ENCODE measurements at regions of chr12 and their contacts with region 1.

Region 1: DNA sequence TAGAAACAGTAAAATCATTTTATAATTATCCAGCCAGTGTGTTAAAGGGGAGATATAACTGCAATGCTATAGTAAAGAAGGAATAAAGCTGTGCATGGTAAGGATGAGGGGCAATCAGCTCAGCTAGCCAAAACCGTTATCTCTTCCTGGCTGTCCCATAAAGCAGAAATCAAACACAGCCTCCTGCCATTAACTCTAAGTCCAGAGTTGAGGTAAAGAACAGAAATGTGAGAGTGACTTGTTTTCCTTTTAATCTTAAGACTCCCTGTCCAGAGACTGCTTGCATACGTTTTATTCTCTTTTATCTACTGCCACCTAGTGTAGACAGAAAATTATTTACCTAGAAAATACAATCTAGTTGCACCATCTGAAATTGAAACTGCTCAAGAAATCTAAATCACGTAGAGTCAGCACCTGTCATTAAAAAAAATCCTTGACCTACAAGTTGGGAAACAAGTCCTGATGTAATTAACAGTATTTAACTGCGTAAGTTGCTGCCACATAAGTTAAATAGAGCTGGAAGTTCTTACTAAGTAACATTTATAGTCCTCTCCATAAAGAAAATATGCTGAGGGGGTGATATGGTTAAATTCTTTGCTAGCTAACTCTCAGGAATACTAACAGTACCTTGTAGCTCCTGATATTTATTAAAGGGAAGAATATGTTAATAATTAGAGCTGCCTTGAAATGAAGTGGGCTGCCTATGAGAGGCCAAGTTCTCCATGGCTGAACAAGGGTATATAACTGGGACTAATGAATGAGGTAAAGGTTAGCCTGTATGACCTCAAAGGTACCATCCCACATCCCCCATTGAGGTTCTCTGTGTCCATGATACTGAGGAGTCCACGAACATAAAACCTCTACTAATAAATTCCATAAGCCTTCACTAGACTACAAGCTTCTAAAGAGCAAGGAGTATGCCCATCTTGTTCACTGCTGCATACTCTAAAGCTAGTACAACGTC is 62.7 kb downstream of the GALNT4 start:
- DNase-seq: no peak
- H3K4me3 ChIP-seq: peak overlapping the region in 1 of 4 donors; percentile 23
- H3K27ac ChIP-seq: peak overlapping the region; percentile 29 to 54 (median 46)
- H3K4me1 ChIP-seq: peaks cover 3 to 27% (median 7%) of the 10 kb centered on the region in 4 donors
- H3K27me3 ChIP-seq: no peaks in the 10 kb centered on the region
- CTCF ChIP-seq: peak; percentile 54 to 80 (median 59)
- EP300 ChIP-seq: no peak
- POLR2A ChIP-seq: no peak

Region 2: GRCh38 chr12:89019408-89020120 is 442.4 kb before region 1 on chr12:
- in situ Hi-C with region 1: loop called in 3 of 4 experiments (anchors 10 to 25 kb)
- intact Hi-C with region 1: no loop called
- DNase-seq: peak; percentile 86
- H3K4me3 ChIP-seq: no peak overlapping the region
- H3K27ac ChIP-seq: no peak overlapping the region
- H3K4me1 ChIP-seq: peaks cover 0 to 15% (median 4%) of the 10 kb centered on the region in 4 donors
- H3K27me3 ChIP-seq: no peaks in the 10 kb centered on the region
- CTCF ChIP-seq: peak; percentile 76 to 86 (median 81)
- EP300 ChIP-seq: no peak
- POLR2A ChIP-seq: no peak

Region 3: GRCh38 chr12:89029961-89030360 is 432.0 kb before region 1 on chr12:
- in situ Hi-C with region 1: loop called in 2 of 4 experiments (anchors 10 kb)
- intact Hi-C with region 1: loop called (anchors 5 kb)
- DNase-seq: no peak
- H3K4me3 ChIP-seq: no peak overlapping the region
- H3K27ac ChIP-seq: no peak overlapping the region
- H3K4me1 ChIP-seq: no peaks in the 10 kb centered on the region
- H3K27me3 ChIP-seq: no peaks in the 10 kb centered on the region
- CTCF ChIP-seq: no peak
- EP300 ChIP-seq: no peak
- POLR2A ChIP-seq: no peak

Region 4: DNA sequence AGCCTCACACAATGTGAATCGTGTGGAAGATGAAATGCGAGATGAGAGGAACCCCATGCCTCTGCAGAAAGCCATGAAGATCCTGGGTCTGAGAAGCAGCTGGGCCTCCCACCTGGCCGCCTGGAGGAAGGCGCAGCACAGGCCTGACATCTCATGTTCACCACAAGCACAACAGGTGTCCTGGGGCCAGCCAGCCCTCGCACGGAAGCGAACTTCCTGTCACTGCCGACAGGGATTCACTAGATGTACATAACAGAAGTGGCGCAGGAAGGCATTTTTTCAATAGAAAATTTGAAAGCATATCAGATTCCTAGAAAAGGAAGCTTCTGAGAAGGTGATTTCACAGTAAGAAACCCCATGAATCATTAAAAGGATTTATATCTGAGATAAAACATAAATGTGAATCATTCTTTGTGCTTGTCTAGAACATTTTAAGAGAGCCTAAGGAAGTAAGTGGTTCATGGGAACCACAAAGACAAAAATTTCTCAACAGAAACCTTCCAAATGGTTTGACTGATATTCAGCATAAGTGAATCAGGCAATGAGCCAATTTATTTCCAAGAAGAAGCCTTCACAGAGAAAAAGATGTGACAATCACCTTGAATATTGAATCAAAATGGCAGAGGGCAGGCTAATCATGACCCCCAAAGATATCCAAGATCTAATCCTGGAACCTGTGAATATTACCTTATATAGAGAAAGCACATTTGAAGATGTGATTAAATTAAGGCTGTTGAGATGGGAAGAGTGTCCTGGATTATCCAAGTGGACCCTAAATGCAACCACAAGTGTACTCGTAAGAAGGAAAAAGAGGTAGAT is 421.6 kb before region 1 on chr12:
- in situ Hi-C with region 1: loop called in 2 of 4 experiments (anchors 10 kb)
- intact Hi-C with region 1: no loop called
- DNase-seq: peak; percentile 61
- H3K4me3 ChIP-seq: no peak overlapping the region
- H3K27ac ChIP-seq: no peak overlapping the region
- H3K4me1 ChIP-seq: no peaks in the 10 kb centered on the region
- H3K27me3 ChIP-seq: no peaks in the 10 kb centered on the region
- CTCF ChIP-seq: no peak
- EP300 ChIP-seq: no peak
- POLR2A ChIP-seq: no peak

Region 5: DNA sequence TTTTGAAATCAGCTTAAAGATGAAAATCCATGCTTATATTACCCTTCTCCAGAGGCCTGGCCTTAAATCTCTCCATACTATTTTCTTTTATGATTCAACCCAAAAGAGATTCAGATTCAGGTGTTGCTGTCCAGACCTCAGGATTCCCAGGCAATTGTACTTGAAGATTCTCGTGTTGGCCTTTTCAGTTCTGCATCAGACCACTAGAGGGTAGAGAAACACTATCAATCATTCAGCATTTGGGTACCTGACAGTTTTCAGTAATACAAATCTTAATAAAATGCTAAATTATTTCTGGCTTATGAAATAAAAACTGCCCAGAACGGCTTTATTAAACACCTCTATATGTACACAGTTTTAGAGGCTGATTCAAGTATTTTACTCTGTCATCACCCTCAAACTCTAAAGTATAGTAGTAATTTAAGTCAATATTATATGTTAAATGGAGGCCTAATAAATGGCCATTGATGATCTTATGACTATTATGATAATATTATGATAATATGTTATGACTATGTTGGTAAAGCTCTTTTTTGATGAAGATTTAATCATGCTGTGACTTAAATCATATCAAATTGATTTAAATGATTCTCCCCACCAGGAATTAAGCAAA is 410.8 kb before region 1 on chr12:
- in situ Hi-C with region 1: loop called (anchors 10 kb)
- intact Hi-C with region 1: loop called (anchors 2 kb)
- DNase-seq: no peak
- H3K4me3 ChIP-seq: no peak overlapping the region
- H3K27ac ChIP-seq: no peak overlapping the region
- H3K4me1 ChIP-seq: no peaks in the 10 kb centered on the region
- H3K27me3 ChIP-seq: no peaks in the 10 kb centered on the region
- CTCF ChIP-seq: peak; percentile 88 to 94 (median 90)
- EP300 ChIP-seq: no peak
- POLR2A ChIP-seq: no peak

Region 6: DNA sequence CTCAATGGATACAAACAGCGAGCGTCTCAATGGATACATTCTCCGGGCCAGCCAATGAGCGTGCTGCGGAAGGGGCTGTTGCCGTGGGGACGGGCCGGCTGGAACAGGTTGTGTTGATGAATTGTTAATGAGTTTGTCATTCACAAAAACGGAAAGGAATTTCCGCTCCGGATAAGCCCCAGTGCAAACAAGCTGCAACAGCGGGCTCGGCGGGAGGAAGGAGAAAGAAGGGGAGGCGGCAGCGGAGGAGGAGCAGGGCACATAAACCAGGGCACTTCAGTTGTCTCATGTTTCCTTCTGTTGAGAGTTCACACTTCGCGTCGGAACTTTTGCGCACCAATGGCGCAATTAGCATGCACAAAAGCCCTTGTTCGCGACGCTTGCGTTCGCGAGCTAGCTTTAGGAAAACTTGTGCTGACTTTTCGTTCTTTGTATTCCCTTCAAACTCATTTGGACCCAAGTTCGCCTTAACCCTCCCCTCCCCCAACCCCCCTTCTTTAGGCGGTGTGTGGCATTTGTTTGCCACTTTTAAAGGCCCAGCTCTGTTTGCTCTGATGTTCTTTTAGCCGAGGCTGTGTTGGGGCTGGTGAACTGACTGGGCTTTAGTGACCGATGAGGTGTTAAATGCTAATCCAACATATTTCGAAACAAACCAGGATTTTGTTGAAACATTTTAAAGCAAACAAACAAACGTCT is 109.3 kb before region 1 on chr12 and contains the start of gene DUSP6:
- in situ Hi-C with region 1: loop called in 1 of 4 experiments (anchors 10 kb)
- intact Hi-C with region 1: loop called (anchors 5 kb)
- DNase-seq: peak; percentile 97
- H3K4me3 ChIP-seq: peak within 1 kb of the TSS; percentile 61 to 71 (median 67)
- H3K27ac ChIP-seq: peak within 1 kb of the TSS; percentile 96 to 98 (median 98)
- H3K4me1 ChIP-seq: peaks cover 8 to 60% (median 21%) of the 10 kb centered on the region in 4 donors
- H3K27me3 ChIP-seq: no peaks in the 10 kb centered on the region
- CTCF ChIP-seq: no peak
- EP300 ChIP-seq: peak; percentile 6
- POLR2A ChIP-seq: peak; percentile 86
- total RNA-seq, gene DUSP6: 22.9 to 83.4 (median 53.2) TPM

Region 7: DNA sequence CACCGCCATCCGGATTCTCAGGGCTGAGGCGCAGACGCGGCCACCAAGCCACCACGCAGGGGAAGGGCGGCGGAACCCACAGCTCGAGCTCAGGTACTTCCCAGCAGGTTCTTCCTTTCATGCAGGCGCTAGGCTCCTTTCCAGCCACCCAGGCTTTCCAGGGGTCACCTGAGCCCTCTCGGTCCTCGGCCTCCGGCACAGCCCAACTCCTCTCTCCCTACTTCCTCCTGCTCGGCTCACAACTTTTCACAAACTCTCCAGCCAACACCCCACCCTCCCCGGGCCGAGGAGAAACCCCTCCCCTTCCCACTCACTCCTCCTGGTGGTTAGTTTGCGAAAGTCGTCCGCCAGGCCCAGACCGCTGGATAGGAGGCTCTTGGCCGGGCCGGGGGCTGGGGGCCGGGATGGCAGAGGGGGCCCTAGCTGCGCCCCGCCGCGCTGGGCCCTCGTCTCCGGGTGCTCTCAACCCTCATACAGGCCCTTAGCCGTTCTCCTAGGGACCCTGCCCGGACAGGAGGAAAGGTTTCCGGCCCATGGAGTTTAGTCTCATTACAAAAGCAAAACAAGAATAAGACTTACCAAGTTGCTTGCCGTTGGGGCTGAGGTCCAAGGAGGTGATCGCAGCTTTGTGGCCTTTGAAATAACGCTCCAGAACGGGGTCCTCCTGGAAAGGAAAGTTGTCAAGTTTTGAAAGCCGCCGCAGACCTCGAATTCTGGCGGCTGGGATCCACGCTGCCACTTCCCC is 62.8 kb after region 1 on chr12 and contains the start of gene GALNT4:
- in situ Hi-C with region 1: loop called in 1 of 4 experiments (anchors 10 kb)
- intact Hi-C with region 1: no loop called
- DNase-seq: peak; percentile 93
- H3K4me3 ChIP-seq: peak within 1 kb of the TSS; percentile 63 to 97 (median 93)
- H3K27ac ChIP-seq: peak within 1 kb of the TSS; percentile 92 to 97 (median 94)
- H3K4me1 ChIP-seq: peaks cover 17 to 52% (median 26%) of the 10 kb centered on the region in 4 donors
- H3K27me3 ChIP-seq: no peaks in the 10 kb centered on the region
- CTCF ChIP-seq: peak; percentile 73 to 96 (median 78)
- EP300 ChIP-seq: no peak
- POLR2A ChIP-seq: peak; percentile 90
- total RNA-seq, gene GALNT4: 11.5 to 37.2 (median 26.1) TPM